ENCODE measurements at regions of chr17 and their contacts with region 1.

Region 1: DNA sequence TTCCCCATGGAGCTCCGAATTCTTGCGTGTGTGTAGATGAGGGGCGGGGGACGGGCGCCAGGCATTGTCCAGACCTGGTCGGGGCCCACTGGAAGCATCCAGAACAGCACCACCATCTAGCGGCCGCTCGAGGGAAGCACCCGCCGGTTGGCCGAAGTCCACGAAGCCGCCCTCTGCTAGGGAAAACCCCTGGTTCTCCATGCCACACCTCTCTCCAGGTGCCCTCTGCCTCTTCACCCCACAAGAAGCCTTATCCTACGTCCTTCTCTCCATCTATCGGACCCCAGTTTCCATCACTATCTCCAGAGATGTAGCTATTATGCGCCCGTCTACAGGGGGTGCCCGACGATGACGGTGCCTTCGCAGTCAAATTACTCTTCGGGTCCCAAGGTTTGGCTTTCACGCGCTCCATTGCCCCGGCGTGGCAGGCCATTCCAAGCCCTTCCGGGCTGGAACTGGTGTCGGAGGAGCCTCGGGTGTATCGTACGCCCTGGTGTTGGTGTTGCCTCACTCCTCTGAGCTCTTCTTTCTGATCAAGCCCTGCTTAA is 617 bp upstream of the SENP3 start:
- DNase-seq: peak; percentile 87 to 99
- H3K4me3 ChIP-seq: peak overlapping the region; percentile 74
- CTCF ChIP-seq: peak in 2 of 3 donors; percentile 63 to 94
- POLR2A ChIP-seq: no peak

Region 2: DNA sequence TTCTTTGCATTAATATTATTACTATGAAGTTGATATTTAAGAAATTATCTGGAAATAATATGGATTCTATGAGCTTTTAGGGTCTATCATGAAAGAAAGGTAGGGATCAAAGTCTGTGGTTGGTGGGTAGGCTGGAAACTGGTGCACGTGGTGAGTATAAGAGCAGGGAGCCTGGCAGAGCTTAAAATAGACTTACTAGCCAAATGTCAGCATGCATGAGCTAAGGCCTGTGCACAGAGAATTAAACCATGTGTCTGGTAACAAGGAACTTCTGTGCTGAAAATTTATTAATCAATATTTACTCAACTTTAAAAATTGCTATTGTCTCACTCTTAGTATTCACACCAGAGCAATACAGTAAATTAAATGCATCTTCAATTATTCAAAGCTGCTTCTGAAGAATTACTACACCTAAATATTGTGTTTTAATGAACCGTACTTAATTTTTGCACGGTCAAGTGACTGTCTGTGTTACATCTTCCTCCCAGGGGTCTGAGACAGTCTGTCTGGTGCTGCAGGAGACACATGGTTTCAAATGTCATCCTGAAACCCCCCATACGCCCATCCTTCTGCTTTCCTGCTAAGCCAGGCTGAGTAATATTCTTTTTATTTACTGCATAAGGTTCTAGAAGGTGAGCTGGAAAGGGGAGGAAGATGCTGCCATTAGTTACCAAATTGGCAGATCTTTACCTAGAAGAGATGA is 1815.8 kb before region 1 on chr17:
- intact Hi-C with region 1: no loop called
- DNase-seq: peak in 1 of 2 donors; percentile 60
- H3K4me3 ChIP-seq: no peak overlapping the region
- CTCF ChIP-seq: no peak
- POLR2A ChIP-seq: no peak

Region 3: GRCh38 chr17:7351665-7352501 is 209.2 kb before region 1 on chr17 and contains the start of gene KCTD11:
- intact Hi-C with region 1: loop called (anchors 10 kb)
- DNase-seq: peak; percentile 84 to 98
- H3K4me3 ChIP-seq: peak within 1 kb of the TSS; percentile 78
- CTCF ChIP-seq: no peak
- POLR2A ChIP-seq: no peak
- total RNA-seq, gene KCTD11: 30.3 to 65.4 (median 42.8) TPM

Region 4: DNA sequence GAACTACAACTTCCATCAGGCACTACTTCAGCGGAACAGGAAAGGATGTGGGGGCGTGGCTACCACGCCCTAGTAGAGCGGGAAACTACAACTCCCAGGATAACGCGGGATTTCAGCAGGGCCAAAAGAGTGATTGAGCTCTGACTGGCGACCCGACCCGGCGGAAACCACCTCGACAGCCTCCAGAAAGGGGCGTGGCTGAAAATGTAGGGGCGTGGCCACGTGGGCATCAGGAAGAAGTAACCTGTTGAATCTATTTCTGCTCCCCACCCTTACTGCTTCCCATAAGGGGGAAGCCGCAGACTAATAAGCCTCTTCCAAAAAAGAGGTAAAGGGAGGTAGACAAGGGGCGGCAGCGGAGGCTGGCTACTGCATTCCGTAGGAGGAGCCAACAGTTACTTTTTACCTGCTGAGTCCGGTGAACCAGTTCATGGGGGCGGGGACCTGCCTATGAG is 125.9 kb before region 1 on chr17 and contains the start of gene TMEM102:
- intact Hi-C with region 1: loop called (anchors 10 kb)
- DNase-seq: peak; percentile 98 to 99
- H3K4me3 ChIP-seq: peak within 1 kb of the TSS; percentile 22
- CTCF ChIP-seq: no peak
- POLR2A ChIP-seq: no peak
- total RNA-seq, gene TMEM102: 15.5 to 23.2 (median 22.1) TPM

Region 5: DNA sequence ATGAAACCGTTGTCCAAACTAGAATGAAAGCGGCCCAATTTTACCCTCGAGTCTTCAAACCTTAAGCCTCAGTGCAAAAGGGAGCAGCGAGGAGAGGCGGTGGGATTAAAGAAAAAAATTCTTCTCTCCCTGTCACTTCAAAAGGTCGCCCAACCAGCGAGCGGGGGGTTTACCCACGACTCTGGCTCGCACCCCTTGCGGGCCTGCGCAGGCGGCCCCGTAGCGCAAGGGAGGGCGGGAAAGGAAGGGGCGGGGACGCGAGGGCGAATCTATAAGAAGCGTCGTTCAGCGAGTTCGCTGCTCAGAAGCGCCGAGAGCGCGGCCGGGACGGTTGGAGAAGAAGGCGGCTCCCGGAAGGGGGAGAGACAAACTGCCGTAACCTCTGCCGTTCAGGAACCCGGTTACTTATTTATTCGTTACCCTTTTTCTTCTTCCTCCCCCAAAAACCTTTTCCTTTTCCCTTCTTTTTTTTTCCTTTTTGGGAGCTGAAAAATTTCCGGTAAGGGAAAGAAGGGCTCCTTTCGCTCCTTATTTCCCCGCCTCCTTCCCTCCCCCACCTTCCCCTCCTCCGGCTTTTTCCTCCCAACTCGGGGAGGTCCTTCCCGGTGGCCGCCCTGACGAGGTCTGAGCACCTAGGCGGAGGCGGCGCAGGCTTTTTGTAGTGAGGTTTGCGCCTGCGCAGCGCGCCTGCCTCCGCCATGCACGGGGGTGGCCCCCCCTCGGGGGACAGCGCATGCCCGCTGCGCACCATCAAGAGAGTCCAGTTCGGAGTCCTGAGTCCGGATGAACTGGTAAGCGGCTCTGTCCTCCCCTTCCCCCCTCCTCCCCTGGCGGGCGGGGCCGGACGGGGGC is 76.8 kb before region 1 on chr17 and contains the start of gene POLR2A:
- intact Hi-C with region 1: no loop called
- DNase-seq: peak; percentile 96 to 99
- H3K4me3 ChIP-seq: peak within 1 kb of the TSS; percentile 71
- CTCF ChIP-seq: no peak
- POLR2A ChIP-seq: peak in 1 of 2 donors; percentile 100
- total RNA-seq, gene POLR2A: 93.9 to 120 (median 110) TPM

Region 6: GRCh38 chr17:7496470-7497183 is 64.5 kb before region 1 on chr17:
- intact Hi-C with region 1: loop called (anchors 10 kb)
- DNase-seq: no peak
- H3K4me3 ChIP-seq: no peak overlapping the region
- CTCF ChIP-seq: no peak
- POLR2A ChIP-seq: no peak